ENCODE measurements at regions of chr7 and their contacts with region 1.

Region 1: GRCh38 chr7:136424058-136424457 is 444.4 kb upstream of the CHRM2 start:
- DNase-seq: no peak
- H3K4me3 ChIP-seq: no peak overlapping the region
- H3K27ac ChIP-seq: no peak overlapping the region
- H3K4me1 ChIP-seq: no peaks in the 10 kb centered on the region
- H3K27me3 ChIP-seq: no peaks in the 10 kb centered on the region
- CTCF ChIP-seq: no peak

Region 2: DNA sequence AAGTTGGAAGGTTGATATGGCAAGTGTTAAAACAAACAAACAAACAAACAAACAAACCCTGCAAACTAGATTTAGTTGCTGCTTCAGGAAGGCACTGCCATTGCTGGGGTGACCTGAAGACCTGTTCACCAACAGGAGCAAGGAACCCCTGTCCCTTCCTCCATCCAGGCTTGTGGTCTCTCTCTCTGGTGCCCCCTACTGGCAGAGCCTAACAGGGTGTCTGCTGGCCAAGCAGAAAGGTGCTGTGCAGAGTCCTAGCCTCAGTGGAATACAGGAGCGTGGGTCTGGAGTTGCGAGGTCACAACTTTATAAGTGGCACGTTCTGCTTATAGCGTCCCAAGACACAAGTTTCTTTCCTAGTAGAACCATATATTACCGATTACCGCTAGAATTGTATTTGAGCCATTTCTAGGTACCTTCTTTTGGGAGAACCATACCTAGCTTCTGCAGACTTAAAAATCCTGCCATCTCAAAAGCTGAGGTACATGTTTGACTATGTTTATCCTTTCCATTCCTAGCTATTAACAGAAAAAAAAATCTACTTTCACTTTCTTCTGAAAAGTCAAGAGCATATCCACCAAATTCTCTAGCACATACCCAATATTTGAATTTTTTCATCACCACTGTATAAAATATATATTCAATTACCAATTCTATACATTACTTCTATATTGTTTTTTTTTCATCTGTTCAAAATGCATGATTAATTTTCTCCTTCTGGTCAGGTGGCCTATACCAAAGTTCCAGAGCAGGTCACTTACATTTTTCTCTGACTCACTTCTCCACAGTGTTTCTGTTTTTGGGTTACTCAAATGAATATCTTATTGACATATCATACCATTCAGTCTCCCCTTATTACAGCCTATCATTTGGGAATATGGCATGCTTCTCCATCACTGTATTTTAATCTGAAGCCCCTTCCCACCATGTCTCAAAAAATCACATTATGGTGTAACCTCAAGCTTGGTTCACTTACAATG is 1673.7 kb before region 1 on chr7:
- CTCF ChIA-PET with region 1: no interaction called
- POLR2A ChIA-PET with region 1: interaction called, 21 read pairs
- intact Hi-C with region 1: no loop called
- DNase-seq: peak; percentile 57
- H3K4me3 ChIP-seq: no peak overlapping the region
- H3K27ac ChIP-seq: no peak overlapping the region
- H3K4me1 ChIP-seq: peaks cover 5% of the 10 kb centered on the region
- H3K27me3 ChIP-seq: no peaks in the 10 kb centered on the region
- CTCF ChIP-seq: peak; percentile 89

Region 3: GRCh38 chr7:136214356-136214755 is 209.7 kb before region 1 on chr7:
- CTCF ChIA-PET with region 1: no interaction called
- POLR2A ChIA-PET with region 1: no interaction called
- intact Hi-C with region 1: no loop called
- DNase-seq: no peak
- H3K4me3 ChIP-seq: no peak overlapping the region
- H3K27ac ChIP-seq: no peak overlapping the region
- H3K4me1 ChIP-seq: no peaks in the 10 kb centered on the region
- H3K27me3 ChIP-seq: no peaks in the 10 kb centered on the region
- CTCF ChIP-seq: no peak; the same call in 1 of the 2 replicates

Region 4: DNA sequence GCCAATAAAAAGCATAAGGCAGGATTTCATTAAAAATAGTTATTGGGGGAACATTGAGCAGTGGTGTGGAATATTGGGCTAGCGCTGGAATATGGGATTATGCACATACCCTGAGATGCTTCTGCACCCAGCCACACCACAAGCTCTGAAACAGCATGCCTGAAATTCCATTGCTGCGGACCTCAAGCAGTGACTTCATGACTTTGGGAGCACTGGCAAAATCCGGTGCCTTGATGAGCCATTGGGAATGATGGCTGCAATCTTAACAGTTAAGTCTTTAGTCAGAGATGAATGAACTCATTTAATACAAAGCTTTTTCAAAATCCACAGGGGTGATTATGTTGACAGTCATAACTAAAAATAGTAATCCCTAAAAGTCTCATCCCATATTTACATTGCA is 172.2 kb before region 1 on chr7:
- CTCF ChIA-PET with region 1: no interaction called
- POLR2A ChIA-PET with region 1: no interaction called
- intact Hi-C with region 1: no loop called
- DNase-seq: no peak
- H3K4me3 ChIP-seq: no peak overlapping the region
- H3K27ac ChIP-seq: no peak overlapping the region
- H3K4me1 ChIP-seq: no peaks in the 10 kb centered on the region
- H3K27me3 ChIP-seq: no peaks in the 10 kb centered on the region
- CTCF ChIP-seq: no peak

Region 5: GRCh38 chr7:136326045-136326609 is 97.9 kb before region 1 on chr7:
- CTCF ChIA-PET with region 1: no interaction called
- POLR2A ChIA-PET with region 1: no interaction called
- intact Hi-C with region 1: no loop called
- DNase-seq: peak; percentile 47
- H3K4me3 ChIP-seq: no peak overlapping the region
- H3K27ac ChIP-seq: no peak overlapping the region
- H3K4me1 ChIP-seq: peaks cover 9% of the 10 kb centered on the region
- H3K27me3 ChIP-seq: no peaks in the 10 kb centered on the region
- CTCF ChIP-seq: no peak